ENCODE measurements at regions of chr15 and their contacts with region 1.

Region 1: DNA sequence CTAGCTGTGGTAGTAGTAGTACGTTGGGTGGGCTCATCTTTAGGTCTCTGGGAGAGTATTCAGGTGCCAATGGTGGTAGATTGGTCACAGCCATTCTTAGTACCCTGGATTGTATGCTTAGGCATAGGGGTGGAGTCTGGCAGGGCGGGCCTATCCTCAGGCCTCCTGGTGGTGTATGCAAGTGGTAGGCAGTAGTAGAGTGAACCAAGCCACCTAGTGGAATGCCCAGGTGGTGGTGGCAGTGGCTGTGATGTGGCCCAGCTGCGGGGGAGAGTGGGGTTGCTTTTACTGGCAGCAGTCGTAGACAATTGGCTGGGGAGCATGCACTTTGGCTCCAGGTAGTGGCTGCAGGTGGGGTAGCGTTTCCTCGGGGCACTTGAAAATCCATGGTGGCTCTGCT is 59.4 kb downstream of the GALK2 start:
- DNase-seq: no peak
- ATAC-seq: no peak

Region 2: GRCh38 chr15:49242820-49243219 is 13.3 kb after region 1 on chr15:
- intact Hi-C with region 1: loop called in 1 of 2 experiments (anchors 1 kb)
- DNase-seq: no peak
- ATAC-seq: peak in 1 of 2 donors; percentile 82

Region 3: GRCh38 chr15:49620658-49621368 is 391.3 kb after region 1 on chr15 and contains the starts of genes DTWD1 and FAM227B:
- intact Hi-C with region 1: no loop called
- DNase-seq: peak; percentile 98
- ATAC-seq: peak; percentile 99 to 100
- total RNA-seq, gene DTWD1: 25.2 to 25.7 TPM
- total RNA-seq, gene FAM227B: 8.2 to 9.8 TPM

Measured in left cardiac atrium (tissue), 4 donors.